HEK293 (cell line): ENCODE measurements at regions of chr14 and their contacts with region 1.

Region 1: GRCh38 chr14:100673036-100673806 is 53.5 kb upstream of the DLK1 start:
- H3K4me3 ChIP-seq: no peak overlapping the region
- H3K27ac ChIP-seq: no peak overlapping the region
- H3K4me1 ChIP-seq: peaks cover 2% of the 10 kb centered on the region; the same call in 1 of the 2 replicates
- CTCF ChIP-seq: no peak

Region 2: GRCh38 chr14:100610511-100611217 is 62.6 kb before region 1 on chr14:
- CTCF ChIA-PET with region 1: no interaction called
- POLR2A ChIA-PET with region 1: no interaction called
- H3K4me3 ChIP-seq: no peak overlapping the region
- H3K27ac ChIP-seq: no peak overlapping the region
- H3K4me1 ChIP-seq: no peaks in the 10 kb centered on the region
- CTCF ChIP-seq: no peak

Region 3: GRCh38 chr14:100662879-100663760 is 10.1 kb before region 1 on chr14:
- CTCF ChIA-PET with region 1: interaction called, 11 read pairs
- POLR2A ChIA-PET with region 1: no interaction called
- H3K4me3 ChIP-seq: no peak overlapping the region
- H3K27ac ChIP-seq: no peak overlapping the region
- H3K4me1 ChIP-seq: no peaks in the 10 kb centered on the region
- CTCF ChIP-seq: peak; percentile 38; the same call in 1 of the 2 replicates